WTC11 (cell line): ENCODE measurements at regions of chr5 and their contacts with region 1.

Region 1: DNA sequence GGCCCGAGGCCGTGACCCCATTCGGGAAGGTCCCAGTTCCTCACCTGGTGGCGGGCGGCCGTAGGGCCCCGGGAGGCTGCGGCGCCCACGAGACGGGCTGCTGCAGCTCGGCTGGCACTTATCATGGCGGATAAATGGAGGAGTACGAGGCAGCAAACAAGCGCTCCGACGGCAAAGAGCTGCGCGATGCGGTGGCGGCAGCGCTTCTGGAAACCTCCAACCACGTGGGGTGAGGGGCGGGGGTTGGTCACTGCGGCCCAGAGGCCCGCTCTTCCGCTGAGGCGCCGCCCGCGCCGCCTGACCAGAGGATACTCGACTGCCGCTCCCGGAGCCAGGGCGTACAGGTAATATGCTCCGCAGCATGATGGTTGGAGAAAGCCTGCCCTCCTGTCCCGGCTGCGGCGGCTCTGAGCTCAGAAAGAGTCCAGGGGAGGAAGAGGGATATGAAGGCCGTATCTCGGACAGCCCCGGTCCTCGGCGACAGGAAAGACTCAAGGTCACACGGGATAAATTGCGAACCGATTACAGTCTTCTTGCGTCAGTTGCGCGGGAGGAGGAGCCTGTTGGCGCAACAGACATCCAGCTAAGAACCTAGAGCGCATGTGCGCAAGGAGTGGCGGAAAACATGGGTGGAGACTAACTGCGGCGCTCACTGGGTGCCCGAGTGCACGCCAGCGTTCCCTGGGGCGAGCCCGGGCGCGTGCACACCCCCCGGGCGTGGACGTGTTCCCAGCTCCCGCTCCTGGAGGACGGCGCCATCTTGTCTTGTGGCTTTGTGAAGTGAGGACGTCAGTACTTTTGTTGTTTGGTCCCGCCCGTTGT is at the start of gene HSPA9:
- DNase-seq: peak; percentile 91
- ATAC-seq: peak; percentile 83
- H3K4me3 Mint-ChIP-seq: peak within 1 kb of the TSS; percentile 97
- H3K27ac Mint-ChIP-seq: peak within 1 kb of the TSS; percentile 100
- H3K4me1 Mint-ChIP-seq: peaks cover 10% of the 10 kb centered on the region
- H3K27me3 Mint-ChIP-seq: no peaks in the 10 kb centered on the region; the same call in 1 of the 2 replicates
- CTCF ChIP-seq: no peak
- total RNA-seq, gene HSPA9: 313 to 414 TPM (median 328 TPM) in 3 replicates

Region 2: DNA sequence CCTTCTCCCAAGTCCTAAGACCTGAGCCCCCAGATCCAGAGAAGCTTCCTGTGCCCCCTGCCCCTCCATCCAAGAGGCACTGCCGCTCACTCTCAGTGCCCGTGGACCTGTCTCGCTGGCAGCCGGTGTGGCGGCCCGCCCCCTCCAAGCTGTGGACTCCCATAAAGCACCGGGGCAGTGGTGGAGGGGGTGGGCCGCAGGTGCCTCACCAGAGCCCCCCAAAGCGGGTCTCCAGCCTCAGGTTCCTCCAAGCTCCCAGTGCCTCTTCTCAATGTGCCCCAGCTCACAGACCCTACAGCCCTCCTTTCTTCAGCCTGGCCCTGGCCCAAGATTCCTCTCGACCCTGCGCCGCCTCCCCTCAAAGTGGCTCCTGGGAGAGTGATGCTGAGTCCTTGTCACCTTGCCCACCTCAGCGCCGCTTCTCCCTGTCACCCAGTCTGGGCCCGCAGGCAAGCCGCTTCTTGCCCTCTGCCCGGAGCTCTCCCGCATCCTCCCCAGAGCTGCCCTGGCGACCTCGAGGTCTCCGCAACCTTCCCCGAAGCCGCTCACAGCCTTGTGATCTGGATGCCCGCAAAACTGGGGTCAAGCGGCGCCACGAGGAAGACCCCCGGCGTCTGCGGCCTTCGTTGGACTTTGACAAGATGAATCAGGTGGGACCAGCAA is 230.3 kb before region 1 on chr5:
- CTCF ChIA-PET with region 1: no interaction called
- POLR2A ChIA-PET with region 1: no interaction called
- DNase-seq: no peak
- ATAC-seq: no peak
- H3K4me3 Mint-ChIP-seq: no peak overlapping the region
- H3K27ac Mint-ChIP-seq: no peak overlapping the region
- H3K4me1 Mint-ChIP-seq: peaks cover 14% of the 10 kb centered on the region
- H3K27me3 Mint-ChIP-seq: no peaks in the 10 kb centered on the region
- CTCF ChIP-seq: no peak

Region 3: GRCh38 chr5:138553437-138554095 is 21.8 kb before region 1 on chr5:
- CTCF ChIA-PET with region 1: interaction called, 4 read pairs
- POLR2A ChIA-PET with region 1: interaction called, 12 read pairs
- DNase-seq: no peak
- ATAC-seq: no peak
- H3K4me3 Mint-ChIP-seq: no peak overlapping the region
- H3K27ac Mint-ChIP-seq: no peak overlapping the region
- H3K4me1 Mint-ChIP-seq: no peaks in the 10 kb centered on the region
- H3K27me3 Mint-ChIP-seq: no peaks in the 10 kb centered on the region
- CTCF ChIP-seq: no peak